Ascending aorta (tissue), 2 donors: ENCODE measurements at regions of chr12 and their contacts with region 1.

Region 1: GRCh38 chr12:116708826-116709756 is 28.8 kb downstream of the SPRING1 start:
- DNase-seq: peak in 1 of 2 donors; percentile 69
- H3K4me3 ChIP-seq: peak overlapping the region in 1 of 2 donors; percentile 43
- H3K27ac ChIP-seq: no peak overlapping the region
- H3K4me1 ChIP-seq: peaks cover 0 to 3% of the 10 kb centered on the region in 2 donors
- H3K27me3 ChIP-seq: no peaks in the 10 kb centered on the region
- CTCF ChIP-seq: peak; percentile 58 to 69 (median 60)

Region 2: DNA sequence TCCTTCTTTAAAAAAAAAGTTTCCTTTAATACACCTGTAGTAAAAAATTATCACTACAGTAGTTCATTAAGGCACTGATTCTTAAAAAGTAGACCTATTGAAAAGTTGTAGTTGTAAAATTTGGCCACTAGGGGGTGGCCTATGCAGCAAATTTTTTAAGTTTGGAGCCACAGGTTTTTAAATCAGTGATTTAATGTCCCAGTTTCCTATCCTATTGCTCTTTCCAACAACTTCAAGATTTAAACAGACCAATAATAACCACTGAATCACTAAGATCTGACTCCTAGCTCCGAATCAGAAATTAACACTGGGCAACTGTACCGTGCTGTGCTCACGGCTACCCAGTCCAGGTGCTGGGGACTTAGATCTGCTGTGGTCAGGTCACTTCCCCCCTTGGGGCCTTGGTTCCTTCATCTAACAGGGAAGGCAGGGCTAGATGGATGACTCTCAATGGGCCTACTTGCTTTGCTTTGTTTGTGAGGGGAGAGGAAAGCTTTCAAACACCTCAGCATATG is 710.9 kb before region 1 on chr12:
- intact Hi-C with region 1: loop called (anchors 2 kb)
- DNase-seq: no peak
- H3K4me3 ChIP-seq: no peak overlapping the region
- H3K27ac ChIP-seq: peak overlapping the region in 1 of 2 donors; percentile 22
- H3K4me1 ChIP-seq: peaks cover 0 to 10% of the 10 kb centered on the region in 2 donors
- H3K27me3 ChIP-seq: no peaks in the 10 kb centered on the region
- CTCF ChIP-seq: peak; percentile 65 to 72 (median 69)

Region 3: DNA sequence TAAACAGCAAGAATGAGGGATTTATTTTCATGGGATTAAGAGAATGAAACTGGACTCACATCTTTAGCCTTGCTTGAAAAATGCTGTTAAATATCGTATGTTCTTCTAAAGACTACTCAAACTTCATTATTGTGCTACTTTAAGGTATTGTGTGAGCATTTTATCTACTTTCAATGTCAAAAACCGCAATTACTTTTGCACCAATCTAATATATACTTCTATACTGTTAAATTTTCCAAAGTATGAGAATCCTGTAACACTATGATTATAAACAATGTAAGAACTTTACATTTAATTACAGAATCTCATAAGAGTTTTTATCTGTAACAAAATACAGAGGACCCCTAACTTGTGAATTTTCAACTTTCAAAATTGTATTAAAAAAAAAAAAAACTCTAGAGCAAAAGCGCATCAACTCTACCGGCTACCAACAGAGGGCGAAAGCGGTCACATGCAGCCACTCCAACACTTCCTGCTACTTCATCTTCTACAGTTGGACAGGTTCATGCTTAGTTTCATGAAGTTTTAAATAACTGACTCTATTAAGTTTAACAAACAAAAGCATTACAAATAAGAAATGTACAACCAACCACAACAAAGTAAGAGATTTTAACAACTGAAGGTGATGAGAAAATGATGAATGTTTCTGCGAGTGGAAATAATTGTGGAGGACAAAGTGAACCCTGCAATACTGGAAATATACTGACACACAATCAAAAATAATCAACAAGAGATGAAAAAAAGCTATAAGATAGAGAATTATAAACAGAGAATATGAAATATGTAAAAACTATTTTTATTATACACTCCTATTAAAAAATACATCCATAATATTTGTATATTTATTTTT is 642.5 kb before region 1 on chr12:
- intact Hi-C with region 1: loop called (anchors 5 kb)
- DNase-seq: no peak
- H3K4me3 ChIP-seq: no peak overlapping the region
- H3K27ac ChIP-seq: no peak overlapping the region
- H3K4me1 ChIP-seq: peaks cover 0 to 15% of the 10 kb centered on the region in 2 donors
- H3K27me3 ChIP-seq: no peaks in the 10 kb centered on the region
- CTCF ChIP-seq: peak; percentile 17 to 73 (median 67)

Region 4: DNA sequence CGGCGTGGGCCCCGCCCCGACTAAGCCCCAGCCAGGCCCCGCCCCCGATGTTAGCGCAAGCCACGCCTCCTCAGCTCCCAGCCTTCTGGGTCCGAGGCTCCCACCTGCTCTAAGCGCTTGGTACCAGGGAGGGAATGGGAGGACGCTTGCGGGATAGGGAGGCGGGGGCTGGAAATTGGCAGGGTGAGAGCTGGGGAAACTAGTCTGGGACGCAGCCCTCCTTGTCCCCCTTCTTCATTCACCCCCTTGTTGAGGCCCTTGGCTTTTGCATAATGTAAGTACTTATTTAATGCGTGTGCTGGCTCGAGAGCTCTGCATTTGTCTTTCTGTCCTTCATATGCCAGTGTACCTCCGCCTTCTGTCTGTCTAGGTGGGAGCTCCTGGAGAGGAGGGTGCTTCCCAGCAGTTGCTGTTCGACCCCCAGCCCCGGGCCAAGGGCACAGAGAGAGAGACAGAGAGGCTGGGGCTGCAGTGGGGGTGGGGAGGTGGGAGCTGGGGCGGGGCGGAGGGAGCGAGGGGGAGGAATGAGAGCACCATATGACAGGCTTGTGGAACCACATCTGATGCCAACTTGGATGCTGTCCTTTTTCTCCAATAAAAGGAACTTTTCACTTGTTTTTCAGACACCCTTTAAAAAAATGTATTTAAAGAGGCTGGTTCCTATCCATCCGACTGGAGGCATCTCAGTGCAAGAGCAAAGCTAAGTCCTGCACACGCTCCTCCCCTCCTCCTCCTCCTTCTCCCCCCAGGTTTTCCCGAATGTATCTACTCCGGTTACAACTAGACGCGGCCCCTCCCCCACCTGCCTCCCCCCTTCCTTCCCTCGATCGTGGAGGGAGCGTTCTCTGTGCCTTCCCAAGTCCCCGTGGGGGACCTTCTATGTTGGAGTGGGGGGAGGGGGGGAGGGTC is 175.5 kb before region 1 on chr12:
- intact Hi-C with region 1: no loop called
- DNase-seq: peak; percentile 30 to 85
- H3K4me3 ChIP-seq: peak overlapping the region; percentile 61 to 84
- H3K27ac ChIP-seq: peak overlapping the region; percentile 62 to 67
- H3K4me1 ChIP-seq: peaks cover 3 to 16% of the 10 kb centered on the region in 2 donors
- H3K27me3 ChIP-seq: no peaks in the 10 kb centered on the region
- CTCF ChIP-seq: no peak